Right ventricle myocardium inferior (tissue), 1 donor: ENCODE measurements at regions of chr22 and their contacts with region 1.

Region 1: DNA sequence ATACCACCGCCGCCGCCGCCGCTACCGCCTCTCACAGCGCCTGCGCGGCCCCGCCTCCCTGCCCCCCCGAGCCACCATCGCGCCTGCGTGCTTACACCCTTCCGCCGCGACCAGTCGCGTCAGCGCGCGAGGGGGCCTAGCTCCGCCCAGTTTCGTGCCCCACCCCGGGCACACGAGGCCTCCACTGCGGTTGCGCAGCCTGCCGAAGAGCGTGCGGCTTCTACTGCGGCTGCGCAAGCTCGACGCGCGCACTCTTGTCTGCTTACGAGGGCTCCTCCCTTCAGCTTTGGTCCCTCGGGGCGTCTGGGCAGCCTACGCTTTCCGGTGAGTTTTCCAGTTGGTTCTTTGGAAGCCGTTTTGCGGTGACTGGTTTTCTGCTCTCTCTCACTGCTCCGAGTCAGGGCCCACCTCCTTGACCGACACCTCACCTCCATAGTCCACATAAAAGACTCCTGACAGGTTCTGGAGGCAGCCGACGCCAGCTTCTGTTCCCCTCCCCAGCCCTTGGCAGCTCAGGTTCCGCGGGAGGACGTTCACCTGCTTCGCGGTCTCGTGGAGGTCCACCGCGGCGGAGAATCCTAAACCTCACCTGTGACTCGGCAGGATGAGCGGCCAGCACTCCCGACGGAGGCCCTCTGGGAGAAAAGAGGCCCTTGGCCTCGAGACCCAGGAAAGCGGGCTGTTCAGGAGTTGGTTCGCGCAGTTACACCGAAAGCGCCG is at the start of gene PITPNB:
- DNase-seq: peak; percentile 99
- ATAC-seq: peak; percentile 98
- total RNA-seq, gene PITPNB: 43.7 TPM

Region 2: DNA sequence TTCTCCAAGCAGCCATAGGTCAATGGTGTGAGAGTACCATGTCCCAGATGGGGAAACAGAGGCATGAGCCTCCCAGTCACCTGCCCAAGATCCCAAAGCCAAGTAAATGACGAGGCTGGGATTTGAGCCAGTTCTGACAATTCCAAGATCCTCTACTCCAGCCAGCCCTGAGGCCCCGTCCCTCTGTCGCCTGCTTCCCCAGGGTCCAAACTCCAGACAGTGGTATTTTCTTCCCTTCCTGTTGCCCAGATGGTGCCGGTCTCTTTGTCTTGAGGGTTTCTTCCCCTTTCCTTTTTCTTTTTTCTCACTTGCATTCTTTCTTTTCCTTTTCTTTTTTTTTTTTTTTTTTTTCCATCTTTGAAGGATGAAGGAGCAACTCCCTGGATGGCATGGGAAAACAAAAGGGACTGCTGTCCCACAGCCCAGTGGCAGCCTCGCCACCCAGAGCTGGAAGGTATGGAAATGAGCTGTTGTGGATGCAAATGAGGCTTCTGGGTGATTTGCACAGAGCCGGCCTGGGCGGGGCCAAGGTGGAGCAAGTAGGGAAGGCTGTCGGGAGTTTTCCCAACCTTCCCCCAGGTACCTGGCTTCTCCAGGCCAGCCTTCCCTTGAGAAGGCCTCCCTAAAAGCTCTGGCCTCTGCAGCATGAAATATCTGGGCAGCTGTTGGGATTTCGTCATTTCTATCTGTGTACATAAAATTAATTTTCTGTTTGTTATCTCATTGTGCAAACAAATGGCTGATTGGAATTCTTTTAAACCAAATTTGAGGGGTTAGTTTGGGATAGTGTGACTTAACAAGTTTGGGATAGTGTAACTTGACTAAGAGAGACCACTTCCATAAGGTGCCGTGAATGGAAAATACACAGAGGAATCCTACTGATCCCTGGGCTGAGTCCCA is 264.6 kb before region 1 on chr22:
- intact Hi-C with region 1: no loop called
- DNase-seq: no peak
- ATAC-seq: no peak

Region 3: GRCh38 chr22:27885977-27886842 is 33.2 kb before region 1 on chr22:
- intact Hi-C with region 1: loop called (anchors 2 kb)
- DNase-seq: no peak
- ATAC-seq: peak; percentile 35